CD4-positive, alpha-beta T cell (primary cell): ENCODE measurements at regions of chr7 and their contacts with region 1.

Region 1: DNA sequence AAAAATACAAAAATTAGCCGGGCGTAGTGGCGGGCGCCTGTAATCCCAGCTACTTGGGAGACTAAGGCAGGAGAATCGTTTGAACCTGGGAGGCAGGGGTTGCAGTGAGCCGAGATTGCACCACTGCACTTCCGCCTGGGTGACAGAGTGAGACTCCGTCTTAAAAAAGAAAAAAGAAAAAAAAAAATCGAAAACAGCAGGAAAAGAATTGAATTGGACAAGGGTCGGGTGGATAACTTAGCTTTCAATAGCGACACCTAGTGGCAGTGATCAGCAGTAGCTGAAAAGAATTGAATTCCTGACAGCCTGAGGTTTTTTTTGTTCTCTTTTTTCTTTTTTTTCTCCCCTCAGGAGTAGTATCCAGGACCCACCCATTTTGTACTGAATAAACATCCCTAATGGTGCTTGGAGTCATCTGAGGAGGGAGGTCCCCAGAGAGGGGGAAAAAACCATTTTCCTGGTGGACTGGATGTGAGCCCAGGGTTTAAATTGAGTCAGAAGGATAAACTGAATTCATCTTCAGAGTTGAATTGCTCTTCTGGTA is 55.1 kb downstream of the CYCS start:
- DNase-seq: peak in 11 of 14 experiments; percentile 6 to 82 (median 36)
- ATAC-seq: peak; percentile 66
- H3K4me3 ChIP-seq: no peak overlapping the region
- H3K4me3 Mint-ChIP-seq: no peak overlapping the region
- H3K27ac ChIP-seq: no peak overlapping the region
- H3K27ac Mint-ChIP-seq: no peak overlapping the region
- H3K4me1 ChIP-seq: peaks cover 3% of the 10 kb centered on the region
- H3K4me1 Mint-ChIP-seq: no peaks in the 10 kb centered on the region
- H3K27me3 ChIP-seq: no peaks in the 10 kb centered on the region
- H3K27me3 Mint-ChIP-seq: no peaks in the 10 kb centered on the region
- CTCF ChIP-seq: peak; percentile 96

Region 2: GRCh38 chr7:24812310-24812945 is 257.5 kb before region 1 on chr7:
- CTCF ChIA-PET with region 1: interaction called, 35 read pairs
- POLR2A ChIA-PET with region 1: interaction called, 5 read pairs
- intact Hi-C with region 1: loop called (anchors 1 kb)
- DNase-seq: peak; percentile 11 to 74 (median 38)
- ATAC-seq: peak; percentile 71
- H3K4me3 ChIP-seq: no peak overlapping the region
- H3K4me3 Mint-ChIP-seq: no peak overlapping the region
- H3K27ac ChIP-seq: no peak overlapping the region
- H3K27ac Mint-ChIP-seq: no peak overlapping the region
- H3K4me1 ChIP-seq: no peaks in the 10 kb centered on the region
- H3K4me1 Mint-ChIP-seq: no peaks in the 10 kb centered on the region
- H3K27me3 ChIP-seq: no peaks in the 10 kb centered on the region
- H3K27me3 Mint-ChIP-seq: no peaks in the 10 kb centered on the region
- CTCF ChIP-seq: peak; percentile 96

Region 3: DNA sequence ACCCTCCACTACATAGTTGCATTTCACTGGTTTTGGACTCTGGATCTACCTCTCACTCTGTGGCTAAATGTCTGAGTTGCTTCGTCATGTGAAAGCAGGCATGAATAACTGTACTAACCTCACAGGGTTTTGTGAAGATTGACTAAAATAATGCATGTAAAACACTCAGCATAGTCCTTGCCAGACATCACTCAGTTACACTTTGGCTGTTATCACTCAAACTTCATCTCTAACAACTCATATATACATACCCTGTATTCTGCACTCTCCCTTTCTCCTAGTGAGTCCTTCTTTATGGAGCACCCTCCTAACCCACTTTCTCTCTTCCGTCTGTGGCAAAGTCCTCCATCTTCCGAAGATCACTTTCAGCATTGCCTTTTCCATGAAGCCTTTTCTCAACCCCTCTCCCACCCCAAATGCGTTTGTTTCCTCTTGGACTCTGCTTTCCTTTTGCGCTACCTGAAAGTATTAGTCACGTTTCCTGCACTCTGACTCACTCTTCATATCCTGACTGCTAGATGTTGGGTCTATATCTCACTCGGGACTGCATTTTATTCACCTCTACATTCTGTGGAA is 162.6 kb before region 1 on chr7:
- CTCF ChIA-PET with region 1: no interaction called
- POLR2A ChIA-PET with region 1: no interaction called
- intact Hi-C with region 1: loop called in 1 of 2 experiments (anchors 10 kb)
- DNase-seq: peak in 7 of 14 experiments; percentile 3 to 73 (median 44)
- ATAC-seq: peak; percentile 76
- H3K4me3 ChIP-seq: peak overlapping the region; percentile 9
- H3K4me3 Mint-ChIP-seq: no peak overlapping the region
- H3K27ac ChIP-seq: no peak overlapping the region
- H3K27ac Mint-ChIP-seq: no peak overlapping the region
- H3K4me1 ChIP-seq: peaks cover 60% of the 10 kb centered on the region
- H3K4me1 Mint-ChIP-seq: peaks cover 32% of the 10 kb centered on the region
- H3K27me3 ChIP-seq: no peaks in the 10 kb centered on the region
- H3K27me3 Mint-ChIP-seq: no peaks in the 10 kb centered on the region
- CTCF ChIP-seq: no peak

Region 4: DNA sequence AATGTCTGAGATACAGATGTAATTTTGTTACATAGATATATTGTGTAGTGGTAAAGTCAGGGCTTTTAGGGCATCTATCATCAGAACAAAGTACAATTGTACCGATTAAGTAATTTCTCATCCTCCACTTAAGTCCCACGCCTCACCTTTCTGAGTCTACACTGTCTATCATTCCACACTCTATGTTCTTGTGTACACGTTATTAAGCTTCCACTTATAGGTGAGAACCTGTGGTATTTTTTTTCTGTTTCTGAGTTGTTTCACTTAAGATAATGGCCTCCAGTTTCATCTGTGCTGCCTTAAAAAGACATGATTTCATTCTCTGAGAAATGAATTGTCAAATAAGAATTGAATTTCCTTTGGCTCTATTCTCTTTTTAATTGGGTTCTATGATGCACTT is 74.5 kb before region 1 on chr7:
- CTCF ChIA-PET with region 1: no interaction called
- POLR2A ChIA-PET with region 1: no interaction called
- intact Hi-C with region 1: no loop called
- DNase-seq: no peak
- ATAC-seq: no peak
- H3K4me3 ChIP-seq: no peak overlapping the region
- H3K4me3 Mint-ChIP-seq: no peak overlapping the region
- H3K27ac ChIP-seq: no peak overlapping the region
- H3K27ac Mint-ChIP-seq: no peak overlapping the region
- H3K4me1 ChIP-seq: no peaks in the 10 kb centered on the region
- H3K4me1 Mint-ChIP-seq: no peaks in the 10 kb centered on the region
- H3K27me3 ChIP-seq: no peaks in the 10 kb centered on the region
- H3K27me3 Mint-ChIP-seq: no peaks in the 10 kb centered on the region
- CTCF ChIP-seq: no peak

Region 5: DNA sequence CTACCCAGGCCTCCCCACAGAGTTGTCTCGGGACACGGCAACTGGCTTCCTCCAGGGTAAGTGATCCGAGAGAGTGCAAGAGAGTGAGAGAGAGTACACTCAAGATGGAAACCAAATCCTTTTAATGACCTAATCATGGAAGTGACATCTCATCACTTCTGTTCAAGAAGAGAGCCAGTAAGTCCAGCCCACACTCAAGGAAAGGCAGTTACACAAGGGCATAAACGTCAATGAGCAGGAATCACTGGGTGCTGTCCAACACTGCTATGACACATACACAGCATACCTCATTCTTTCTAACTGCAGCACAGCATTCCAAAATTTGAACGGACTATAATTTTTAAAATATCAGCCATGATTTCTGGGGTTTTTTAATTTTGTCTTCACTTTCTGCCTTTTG is 60.7 kb before region 1 on chr7:
- CTCF ChIA-PET with region 1: no interaction called
- POLR2A ChIA-PET with region 1: no interaction called
- intact Hi-C with region 1: no loop called
- DNase-seq: no peak
- ATAC-seq: no peak
- H3K4me3 ChIP-seq: no peak overlapping the region
- H3K4me3 Mint-ChIP-seq: no peak overlapping the region
- H3K27ac ChIP-seq: no peak overlapping the region
- H3K27ac Mint-ChIP-seq: no peak overlapping the region
- H3K4me1 ChIP-seq: no peaks in the 10 kb centered on the region
- H3K4me1 Mint-ChIP-seq: no peaks in the 10 kb centered on the region
- H3K27me3 ChIP-seq: no peaks in the 10 kb centered on the region
- H3K27me3 Mint-ChIP-seq: peaks cover 5% of the 10 kb centered on the region
- CTCF ChIP-seq: no peak

Region 6: DNA sequence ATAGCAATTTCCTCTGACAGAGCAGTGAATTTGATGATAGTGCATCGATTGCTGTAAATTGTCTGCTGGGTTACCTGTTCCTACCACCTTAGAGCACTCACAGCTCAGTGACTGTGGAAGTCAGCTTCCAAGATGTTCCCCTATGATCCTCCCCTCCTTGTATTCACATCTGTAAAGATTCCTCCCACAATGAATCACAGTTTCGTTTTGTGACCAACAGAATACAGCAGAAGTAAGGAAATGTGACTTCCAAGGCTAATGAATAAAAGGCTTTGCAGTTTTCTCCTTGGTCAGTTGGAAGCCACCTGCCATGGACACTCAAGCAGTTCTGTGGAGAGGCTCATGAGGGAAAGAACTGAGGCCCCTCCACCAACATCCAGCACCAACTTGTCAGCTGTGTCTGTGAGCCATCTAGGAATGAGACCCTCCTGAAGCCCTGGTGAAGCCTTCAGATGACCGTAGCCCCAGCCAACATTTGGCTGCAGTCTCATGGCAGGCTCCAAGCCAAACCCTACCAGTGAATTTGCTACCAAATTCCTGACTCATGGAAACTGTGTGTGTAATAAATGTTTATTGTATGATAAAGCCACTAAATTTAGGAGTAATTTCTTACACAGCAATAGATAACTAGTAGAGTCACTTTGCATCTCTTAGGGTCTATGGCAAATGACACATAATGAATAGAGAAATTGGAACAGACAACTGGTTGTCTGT is 467.8 kb after region 1 on chr7:
- CTCF ChIA-PET with region 1: no interaction called
- POLR2A ChIA-PET with region 1: no interaction called
- intact Hi-C with region 1: no loop called
- DNase-seq: no peak
- ATAC-seq: no peak
- H3K4me3 ChIP-seq: no peak overlapping the region
- H3K4me3 Mint-ChIP-seq: no peak overlapping the region
- H3K27ac ChIP-seq: no peak overlapping the region
- H3K27ac Mint-ChIP-seq: no peak overlapping the region
- H3K4me1 ChIP-seq: no peaks in the 10 kb centered on the region
- H3K4me1 Mint-ChIP-seq: peaks cover 11% of the 10 kb centered on the region
- H3K27me3 ChIP-seq: no peaks in the 10 kb centered on the region
- H3K27me3 Mint-ChIP-seq: peaks cover 6% of the 10 kb centered on the region
- CTCF ChIP-seq: no peak

Region 7: DNA sequence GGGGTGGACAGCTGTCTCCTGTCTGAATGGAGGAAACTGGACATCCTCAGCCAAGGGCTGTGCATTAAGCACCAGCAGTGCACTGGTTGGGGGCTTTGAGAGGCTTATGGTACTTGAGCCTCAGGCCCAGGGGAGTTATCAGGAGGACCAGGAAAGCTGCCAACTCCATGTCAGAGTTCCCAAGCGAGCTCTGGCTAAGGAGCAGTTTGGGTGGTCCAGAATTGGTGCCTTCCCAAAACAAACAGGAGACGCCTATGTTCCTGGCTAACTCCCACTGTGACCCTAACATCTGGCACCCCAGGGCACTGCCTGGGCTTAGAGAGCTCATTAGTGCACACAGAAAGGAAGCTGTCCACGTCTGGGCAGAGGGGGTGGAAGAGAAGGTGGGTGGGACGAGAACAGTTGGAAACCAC is 566.9 kb after region 1 on chr7:
- CTCF ChIA-PET with region 1: no interaction called
- POLR2A ChIA-PET with region 1: no interaction called
- intact Hi-C with region 1: no loop called
- DNase-seq: no peak
- ATAC-seq: no peak
- H3K4me3 ChIP-seq: no peak overlapping the region
- H3K4me3 Mint-ChIP-seq: no peak overlapping the region
- H3K27ac ChIP-seq: no peak overlapping the region
- H3K27ac Mint-ChIP-seq: no peak overlapping the region
- H3K4me1 ChIP-seq: no peaks in the 10 kb centered on the region
- H3K4me1 Mint-ChIP-seq: no peaks in the 10 kb centered on the region
- H3K27me3 ChIP-seq: no peaks in the 10 kb centered on the region
- H3K27me3 Mint-ChIP-seq: no peaks in the 10 kb centered on the region
- CTCF ChIP-seq: no peak